Esophagus squamous epithelium (tissue), 5 donors: ENCODE measurements at regions of chrX and their contacts with region 1.

Region 1: GRCh38 chrX:107676559-107677378 is 48.5 kb downstream of the PRPS1 start:
- DNase-seq: peak; percentile 20
- H3K4me3 ChIP-seq: peak overlapping the region; percentile 41 to 70 (median 56)
- H3K27ac ChIP-seq: peak overlapping the region; percentile 91 to 98 (median 92)
- H3K4me1 ChIP-seq: peaks cover 0 to 77% (median 29%) of the 10 kb centered on the region in 3 donors
- H3K27me3 ChIP-seq: no peaks in the 10 kb centered on the region
- CTCF ChIP-seq: no peak
- POLR2A ChIP-seq: peak in 2 of 4 donors; percentile 73 to 81

Region 2: GRCh38 chrX:107710617-107711391 is 34.0 kb after region 1 on chrX:
- intact Hi-C with region 1: loop called (anchors 5 kb)
- DNase-seq: peak; percentile 13
- H3K4me3 ChIP-seq: peak overlapping the region in 1 of 4 donors; percentile 45
- H3K27ac ChIP-seq: peak overlapping the region; percentile 90 to 98 (median 95)
- H3K4me1 ChIP-seq: peaks cover 0 to 58% (median 21%) of the 10 kb centered on the region in 3 donors
- H3K27me3 ChIP-seq: no peaks in the 10 kb centered on the region
- CTCF ChIP-seq: no peak
- POLR2A ChIP-seq: peak in 2 of 4 donors; percentile 19 to 58